PC-9 (cell line): ENCODE measurements at regions of chr3 and their contacts with region 1.

Region 1: GRCh38 chr3:141192345-141192744 is 39.3 kb upstream of the PXYLP1 start:
- DNase-seq: peak; percentile 74 to 97
- H3K4me3 ChIP-seq: no peak overlapping the region
- H3K27ac ChIP-seq: no peak overlapping the region
- H3K4me1 ChIP-seq: no peaks in the 10 kb centered on the region
- H3K27me3 ChIP-seq: peaks cover 59% of the 10 kb centered on the region
- CTCF ChIP-seq: peak; percentile 97

Region 2: GRCh38 chr3:139935016-139935865 is 1257.1 kb before region 1 on chr3 and contains the start of gene CLSTN2:
- CTCF ChIA-PET with region 1: no interaction called
- POLR2A ChIA-PET with region 1: no interaction called
- intact Hi-C with region 1: loop called (anchors 1 kb)
- DNase-seq: no peak
- H3K4me3 ChIP-seq: no peak within 1 kb of the TSS
- H3K27ac ChIP-seq: no peak within 1 kb of the TSS
- H3K4me1 ChIP-seq: no peaks in the 10 kb centered on the region
- H3K27me3 ChIP-seq: no peaks in the 10 kb centered on the region
- CTCF ChIP-seq: no peak
- total RNA-seq, gene CLSTN2: not detected in 2 replicates

Region 3: DNA sequence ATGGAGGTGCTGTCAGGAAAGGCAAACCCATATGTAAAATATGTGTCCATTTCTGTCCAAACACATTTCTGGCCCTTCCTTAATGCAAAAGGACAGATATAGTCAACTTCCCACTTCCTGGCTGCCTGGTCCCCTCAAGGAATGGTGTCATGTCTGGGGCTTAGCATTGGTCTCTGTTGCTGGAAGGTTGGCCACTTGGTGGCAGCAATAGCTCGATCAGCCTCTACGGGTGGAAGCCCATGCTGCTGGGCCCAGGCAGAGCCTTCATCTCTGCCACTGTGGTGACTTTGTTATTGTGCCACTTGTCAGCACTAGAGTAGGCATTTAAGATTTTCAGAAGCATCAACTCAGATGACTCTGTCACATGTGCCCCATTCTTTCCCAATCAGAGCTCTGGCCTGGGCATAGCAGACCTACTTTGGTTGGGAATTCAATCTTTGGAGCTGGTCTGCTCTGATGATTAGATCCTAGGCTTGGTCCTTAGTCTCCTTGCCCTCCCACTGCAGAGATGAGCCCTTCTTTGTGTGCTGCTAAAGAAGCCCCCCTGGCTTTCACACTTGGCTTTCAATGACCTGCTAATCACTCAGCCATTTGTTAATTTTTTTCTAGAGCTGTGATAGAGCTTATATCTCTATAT is 192.2 kb before region 1 on chr3:
- CTCF ChIA-PET with region 1: no interaction called
- POLR2A ChIA-PET with region 1: no interaction called
- intact Hi-C with region 1: loop called (anchors 1 kb)
- DNase-seq: peak in 1 of 2 experiments; percentile 21
- H3K4me3 ChIP-seq: no peak overlapping the region
- H3K27ac ChIP-seq: no peak overlapping the region
- H3K4me1 ChIP-seq: no peaks in the 10 kb centered on the region
- H3K27me3 ChIP-seq: no peaks in the 10 kb centered on the region
- CTCF ChIP-seq: peak; percentile 64

Region 4: DNA sequence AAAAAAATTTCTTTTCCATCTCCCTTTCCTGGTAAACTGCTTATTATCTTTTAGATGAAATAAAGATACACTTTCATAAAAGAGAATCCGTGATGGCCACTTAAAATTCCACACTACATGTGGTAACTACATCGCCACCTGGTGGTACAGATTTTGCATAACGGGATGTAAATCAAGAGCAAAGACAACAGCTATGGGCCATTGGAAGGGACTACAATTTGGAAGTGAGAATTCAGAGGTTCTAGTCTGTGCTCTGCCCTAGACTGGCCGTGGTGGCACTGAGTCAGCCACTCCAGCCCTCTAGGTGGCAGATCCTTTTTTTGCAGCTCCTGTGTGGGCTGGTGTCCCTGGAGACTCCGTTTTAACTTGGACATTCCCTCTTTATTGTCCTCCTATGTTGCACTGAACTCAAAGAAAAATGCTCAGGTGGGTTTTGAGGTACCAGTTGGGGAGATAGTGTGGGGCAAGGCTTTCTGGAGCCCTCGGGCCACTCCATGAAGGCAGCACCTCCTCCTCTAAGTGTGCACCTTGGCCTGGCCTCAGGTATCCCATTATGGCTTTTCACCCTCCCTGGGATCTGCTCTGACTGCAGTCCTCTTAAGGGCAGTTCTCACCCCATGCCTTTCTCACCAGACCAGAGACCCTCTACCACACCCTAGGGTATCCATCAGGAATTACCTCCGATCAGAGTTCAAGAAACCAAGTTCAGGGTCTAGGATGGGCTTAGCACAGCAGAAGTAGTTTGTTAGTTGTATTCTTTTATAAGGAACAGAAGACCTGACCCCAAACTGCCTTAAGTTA is 86.3 kb before region 1 on chr3:
- CTCF ChIA-PET with region 1: no interaction called
- POLR2A ChIA-PET with region 1: no interaction called
- intact Hi-C with region 1: loop called (anchors 2 kb)
- DNase-seq: peak; percentile 44 to 45
- H3K4me3 ChIP-seq: no peak overlapping the region
- H3K27ac ChIP-seq: no peak overlapping the region
- H3K4me1 ChIP-seq: no peaks in the 10 kb centered on the region
- H3K27me3 ChIP-seq: peaks cover 11% of the 10 kb centered on the region; the same call in 1 of the 2 replicates
- CTCF ChIP-seq: peak; percentile 79

Region 5: GRCh38 chr3:141303481-141304223 is 111.3 kb after region 1 on chr3:
- CTCF ChIA-PET with region 1: no interaction called
- POLR2A ChIA-PET with region 1: no interaction called
- intact Hi-C with region 1: loop called (anchors 1 kb)
- DNase-seq: peak; percentile 56
- H3K4me3 ChIP-seq: no peak overlapping the region
- H3K27ac ChIP-seq: no peak overlapping the region
- H3K4me1 ChIP-seq: peaks cover 11% of the 10 kb centered on the region
- H3K27me3 ChIP-seq: no peaks in the 10 kb centered on the region
- CTCF ChIP-seq: peak; percentile 93